Activated CD8-positive, alpha-beta T cell treated with anti-CD3 and anti-CD28 coated beads for 36 hours (primary cell): ENCODE measurements at regions of chr10 and their contacts with region 1.

Region 1: DNA sequence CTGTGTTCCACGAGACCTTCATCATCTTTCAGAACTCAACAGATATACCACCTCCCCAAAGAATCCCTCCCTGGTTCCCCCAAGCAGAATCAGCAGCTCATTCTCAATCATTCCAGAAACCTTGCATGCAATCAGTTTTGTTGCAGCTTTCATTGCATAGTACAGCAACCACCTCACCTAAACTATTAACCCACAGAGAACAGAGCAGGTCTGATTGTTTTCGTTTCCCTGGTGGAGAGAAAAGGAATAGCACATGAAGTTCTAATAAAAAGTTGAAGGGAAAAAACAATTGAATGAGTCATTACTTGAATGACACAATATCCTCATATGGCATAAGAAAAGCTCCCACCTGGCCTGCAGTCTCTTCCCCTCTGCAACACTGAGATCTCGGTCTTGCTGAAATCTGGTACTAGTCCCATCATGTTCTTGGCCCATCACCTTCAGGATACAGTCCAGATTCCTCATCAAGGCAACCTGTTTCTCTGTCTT is 147.1 kb upstream of the GDF10 start:
- DNase-seq: peak; percentile 22
- ATAC-seq: peak; percentile 85
- H3K4me3 Mint-ChIP-seq: no peak overlapping the region
- H3K27ac Mint-ChIP-seq: peak overlapping the region; percentile 17
- H3K4me1 Mint-ChIP-seq: peaks cover 13% of the 10 kb centered on the region
- H3K27me3 Mint-ChIP-seq: no peaks in the 10 kb centered on the region
- CTCF ChIP-seq: peak; percentile 69

Region 2: GRCh38 chr10:47165711-47166524 is 13.0 kb after region 1 on chr10:
- CTCF ChIA-PET with region 1: interaction called, 10 read pairs
- POLR2A ChIA-PET with region 1: interaction called, 3 read pairs
- intact Hi-C with region 1: no loop called
- DNase-seq: peak; percentile 59
- ATAC-seq: peak; percentile 78
- H3K4me3 Mint-ChIP-seq: peak overlapping the region; percentile 69
- H3K27ac Mint-ChIP-seq: peak overlapping the region; percentile 89
- H3K4me1 Mint-ChIP-seq: peaks cover 34% of the 10 kb centered on the region
- H3K27me3 Mint-ChIP-seq: no peaks in the 10 kb centered on the region
- CTCF ChIP-seq: no peak